ENCODE measurements at regions of chr19 and their contacts with region 1.

Region 1: GRCh38 chr19:3108775-3109174 is 14.6 kb downstream of the GNA11 start:
- DNase-seq: peak; percentile 57 to 77
- ATAC-seq: peak; percentile 50 to 75 (median 67)
- H3K4me3 ChIP-seq: no peak overlapping the region
- H3K27ac ChIP-seq: no peak overlapping the region
- H3K4me1 ChIP-seq: peaks cover 8% of the 10 kb centered on the region
- H3K27me3 ChIP-seq: no peaks in the 10 kb centered on the region
- CTCF ChIP-seq: peak; percentile 78

Region 2: GRCh38 chr19:2950286-2951124 is 158.3 kb before region 1 on chr19:
- intact Hi-C with region 1: loop called (anchors 5 kb)
- DNase-seq: peak; percentile 100
- ATAC-seq: peak; percentile 97 to 98 (median 97)
- H3K4me3 ChIP-seq: peak overlapping the region; percentile 79
- H3K27ac ChIP-seq: peak overlapping the region; percentile 91
- H3K4me1 ChIP-seq: peaks cover 13% of the 10 kb centered on the region
- H3K27me3 ChIP-seq: no peaks in the 10 kb centered on the region
- CTCF ChIP-seq: no peak

Region 3: DNA sequence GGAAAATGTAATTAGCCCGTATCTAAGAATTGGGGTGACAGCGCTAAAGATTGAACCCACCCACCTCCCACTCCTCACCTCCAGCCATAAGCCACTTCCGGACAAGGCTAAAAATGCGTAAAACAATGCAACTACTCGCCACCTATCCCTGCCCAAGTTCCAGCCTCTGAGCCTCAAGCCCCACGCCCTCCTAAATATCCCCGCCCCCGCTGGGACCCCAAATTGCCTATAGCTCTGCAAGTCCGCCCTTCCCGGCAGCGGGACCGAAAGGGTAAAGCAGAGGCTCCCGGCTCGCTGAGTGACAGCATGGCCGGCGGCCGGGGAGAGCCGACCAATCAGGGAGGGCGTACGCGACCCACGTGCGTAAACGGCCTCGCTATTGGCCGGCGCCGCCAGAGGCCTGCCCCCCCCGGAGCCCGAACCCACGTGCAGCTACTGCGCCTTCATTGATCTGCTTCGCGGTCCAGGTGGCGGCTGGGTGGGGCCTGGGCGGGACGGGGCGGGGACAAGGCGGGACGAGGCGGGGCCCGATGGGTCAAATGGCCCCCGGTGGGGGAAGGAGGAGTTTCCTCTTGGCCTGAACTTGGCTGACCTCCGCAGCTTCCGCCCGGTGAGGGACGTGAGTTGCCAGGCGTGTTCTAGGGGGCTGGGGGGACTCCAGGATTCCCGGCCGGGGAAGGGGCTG is 131.6 kb before region 1 on chr19 and contains the start of gene TLE6:
- intact Hi-C with region 1: loop called in 1 of 2 experiments (anchors 5 kb)
- DNase-seq: peak; percentile 96 to 99
- ATAC-seq: peak; percentile 97 to 99 (median 98)
- H3K4me3 ChIP-seq: peak within 1 kb of the TSS; percentile 76
- H3K27ac ChIP-seq: peak within 1 kb of the TSS; percentile 44
- H3K4me1 ChIP-seq: peaks cover 17% of the 10 kb centered on the region
- H3K27me3 ChIP-seq: no peaks in the 10 kb centered on the region
- CTCF ChIP-seq: no peak
- total RNA-seq, gene TLE6: 0.50 to 0.89 (median 0.68) TPM in 3 of 4 donors, not detected in the other

Region 4: GRCh38 chr19:3035542-3036118 is 73.1 kb before region 1 on chr19:
- intact Hi-C with region 1: loop called in 1 of 2 experiments (anchors 5 kb)
- DNase-seq: peak; percentile 97 to 99
- ATAC-seq: peak; percentile 93 to 95 (median 94)
- H3K4me3 ChIP-seq: peak overlapping the region; percentile 78
- H3K27ac ChIP-seq: peak overlapping the region; percentile 93
- H3K4me1 ChIP-seq: peaks cover 15% of the 10 kb centered on the region
- H3K27me3 ChIP-seq: no peaks in the 10 kb centered on the region
- CTCF ChIP-seq: no peak

Region 5: GRCh38 chr19:3075895-3076431 is 32.8 kb before region 1 on chr19:
- intact Hi-C with region 1: loop called in 1 of 2 experiments (anchors 5 kb)
- DNase-seq: peak; percentile 53 to 79
- ATAC-seq: peak; percentile 66 to 80 (median 70)
- H3K4me3 ChIP-seq: no peak overlapping the region
- H3K27ac ChIP-seq: no peak overlapping the region
- H3K4me1 ChIP-seq: peaks cover 11% of the 10 kb centered on the region
- H3K27me3 ChIP-seq: no peaks in the 10 kb centered on the region
- CTCF ChIP-seq: peak; percentile 89